CD14-positive monocyte (primary cell): ENCODE measurements at regions of chrX and their contacts with region 1.

Region 1: GRCh38 chrX:136162831-136163570 is 15.7 kb downstream of the FHL1 start:
- DNase-seq: peak; percentile 15 to 23 (median 21)
- H3K4me3 ChIP-seq: no peak overlapping the region
- H3K4me3 Mint-ChIP-seq: no peak overlapping the region
- H3K27ac ChIP-seq: no peak overlapping the region
- H3K27ac Mint-ChIP-seq: no peak overlapping the region
- H3K4me1 ChIP-seq: peaks cover 5 to 10% of the 10 kb centered on the region in 2 donors
- H3K4me1 Mint-ChIP-seq: peaks cover 3% of the 10 kb centered on the region
- H3K27me3 ChIP-seq: peaks cover 0 to 3% of the 10 kb centered on the region in 2 donors
- H3K27me3 Mint-ChIP-seq: peaks cover 0 to 15% (median 1%) of the 10 kb centered on the region in 3 donors
- CTCF ChIP-seq: peak; percentile 63

Region 2: DNA sequence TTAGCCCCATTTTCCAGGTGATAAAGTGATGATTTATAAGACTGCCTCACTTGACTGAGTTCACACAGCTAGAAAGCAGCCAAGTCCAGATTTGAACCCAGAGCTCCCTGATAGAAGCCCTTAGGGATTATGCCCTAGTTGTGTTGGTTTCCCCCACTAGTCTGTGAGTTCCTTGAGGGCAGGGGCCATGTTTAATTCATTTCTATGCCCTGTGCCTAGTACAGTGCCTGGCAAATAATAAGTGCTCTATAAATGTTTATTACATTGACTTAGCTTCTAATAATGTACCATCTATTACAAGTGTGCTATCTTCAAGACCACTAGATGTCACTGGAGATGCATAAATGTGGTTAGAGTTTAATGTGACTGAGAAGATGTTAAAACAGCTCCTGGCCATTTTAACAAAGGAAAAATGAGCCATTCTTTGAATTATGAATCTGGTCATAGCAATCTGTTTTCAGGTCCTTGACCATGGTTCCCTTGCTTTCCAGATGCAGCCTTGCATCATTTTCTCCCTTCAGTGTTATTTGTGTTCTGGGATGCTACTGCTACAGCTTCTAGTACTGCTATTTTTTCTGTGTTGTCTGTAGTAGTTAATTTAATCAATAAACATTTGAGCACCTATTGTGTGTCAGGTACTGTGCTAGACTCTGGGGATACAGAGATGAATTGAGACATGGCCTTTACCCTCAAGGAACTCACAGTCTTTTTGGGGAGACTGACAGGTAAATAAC is 134.6 kb before region 1 on chrX:
- intact Hi-C with region 1: loop called in 1 of 2 experiments (anchors 5 kb)
- DNase-seq: peak; percentile 3 to 31 (median 29)
- H3K4me3 ChIP-seq: no peak overlapping the region
- H3K4me3 Mint-ChIP-seq: no peak overlapping the region
- H3K27ac ChIP-seq: no peak overlapping the region
- H3K27ac Mint-ChIP-seq: no peak overlapping the region
- H3K4me1 ChIP-seq: no peaks in the 10 kb centered on the region
- H3K4me1 Mint-ChIP-seq: no peaks in the 10 kb centered on the region
- H3K27me3 ChIP-seq: no peaks in the 10 kb centered on the region
- H3K27me3 Mint-ChIP-seq: no peaks in the 10 kb centered on the region
- CTCF ChIP-seq: peak; percentile 36

Region 3: DNA sequence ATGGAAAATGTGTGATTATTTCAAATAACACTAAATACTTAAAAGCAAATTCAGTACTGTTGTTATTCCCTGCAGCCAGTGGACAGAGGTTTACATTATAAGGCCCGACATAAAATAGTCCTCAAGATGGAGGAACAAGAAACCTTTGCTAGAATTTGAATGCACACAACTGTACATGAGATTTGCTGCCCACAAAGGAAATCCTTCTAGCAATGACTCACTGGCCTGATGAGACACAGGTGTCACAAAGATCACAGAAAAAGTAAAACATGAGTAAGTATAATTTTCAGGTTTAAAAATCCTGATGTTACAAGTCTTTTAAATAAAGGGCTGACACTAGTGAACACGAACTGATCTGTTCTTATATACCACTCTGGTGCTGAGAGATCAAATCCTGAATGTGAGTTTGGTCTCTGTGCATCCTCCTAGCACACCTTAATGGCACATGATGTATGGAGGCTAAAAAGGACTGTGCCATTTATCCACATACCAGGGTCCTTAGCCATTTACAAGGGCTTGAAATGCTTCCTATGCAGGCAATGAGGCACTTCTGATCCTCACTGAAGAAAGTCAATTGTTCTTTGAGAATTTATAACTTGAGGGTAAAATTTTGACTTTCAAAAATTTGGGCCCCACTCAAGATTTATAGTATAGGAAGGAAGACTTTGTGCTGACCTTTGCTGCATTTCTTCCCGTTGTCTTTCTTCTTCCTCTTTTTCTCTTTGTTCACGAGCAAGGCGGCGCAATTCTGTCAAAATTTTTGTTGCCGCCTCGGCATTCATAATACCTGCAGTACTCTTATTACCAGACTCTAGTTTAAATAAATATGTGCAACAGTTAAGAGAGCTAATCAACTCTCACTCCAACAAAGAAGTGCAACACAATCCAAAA is 65.2 kb after region 1 on chrX:
- intact Hi-C with region 1: no loop called
- DNase-seq: peak in 1 of 3 donors; percentile 4
- H3K4me3 ChIP-seq: peak overlapping the region in 1 of 3 experiments; percentile 30
- H3K4me3 Mint-ChIP-seq: peak overlapping the region in 1 of 2 donors; percentile 55
- H3K27ac ChIP-seq: peak overlapping the region in 1 of 2 donors; percentile 20
- H3K27ac Mint-ChIP-seq: no peak overlapping the region
- H3K4me1 ChIP-seq: peaks cover 0 to 2% of the 10 kb centered on the region in 2 donors
- H3K4me1 Mint-ChIP-seq: peaks cover 9% of the 10 kb centered on the region
- H3K27me3 ChIP-seq: no peaks in the 10 kb centered on the region
- H3K27me3 Mint-ChIP-seq: peaks cover 0 to under 1% (median 0%) of the 10 kb centered on the region in 3 donors
- CTCF ChIP-seq: no peak